Activated CD4-positive, alpha-beta T cell treated with anti-CD3 and anti-CD28 coated beads, Interleukin-2, amount 10 ng/mL, durations not matched to agents 24 days and 14 days (primary cell): ENCODE measurements at regions of chr7 and their contacts with region 1.

Region 1: DNA sequence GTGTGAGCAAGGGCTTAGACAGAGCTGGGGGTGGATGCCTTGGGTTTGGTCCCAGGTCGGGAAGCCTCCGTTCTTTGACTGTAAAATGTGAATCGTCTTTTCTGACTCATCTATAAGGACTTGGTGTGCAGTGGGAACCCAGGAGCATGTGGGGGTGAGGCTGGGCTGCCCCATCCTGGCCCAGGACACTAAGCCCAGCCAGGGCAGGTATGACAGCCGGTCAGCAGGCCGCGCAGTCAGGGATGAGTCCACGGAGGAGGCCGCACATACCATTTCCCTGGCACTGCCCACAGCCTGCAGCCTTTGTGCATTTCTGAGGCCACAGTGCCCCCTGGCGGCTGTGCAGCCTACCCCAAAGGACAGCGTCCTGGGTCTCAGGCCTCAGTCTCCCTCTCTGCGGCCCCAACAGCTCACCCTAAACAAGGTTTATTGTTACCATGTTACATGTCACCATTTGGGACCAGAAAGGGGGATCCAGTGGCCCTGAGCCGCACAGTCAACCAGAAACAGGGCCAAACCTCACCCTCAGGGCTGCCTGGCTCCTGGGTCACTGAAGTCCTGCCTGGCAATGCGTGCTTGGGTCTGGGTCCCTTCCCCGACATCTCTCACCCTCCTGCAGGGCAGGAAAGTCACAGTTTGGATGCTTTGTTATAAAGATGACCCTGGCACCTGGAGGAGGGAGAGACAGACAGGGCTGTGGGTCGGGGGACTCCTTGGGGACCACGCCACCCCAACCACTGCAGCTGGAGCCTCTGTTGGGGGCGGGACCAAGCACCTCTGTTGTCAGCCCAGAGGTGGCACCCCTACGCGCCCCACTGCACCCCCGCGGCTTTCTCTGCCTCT is 14.4 kb upstream of the SH2B2 start:
- DNase-seq: peak; percentile 92
- H3K4me3 Mint-ChIP-seq: no peak overlapping the region
- H3K27ac Mint-ChIP-seq: no peak overlapping the region
- H3K4me1 Mint-ChIP-seq: peaks cover 2% of the 10 kb centered on the region
- H3K27me3 Mint-ChIP-seq: no peaks in the 10 kb centered on the region

Region 2: GRCh38 chr7:101542527-101543241 is 729.6 kb before region 1 on chr7:
- intact Hi-C with region 1: loop called (anchors 1 kb)
- DNase-seq: peak; percentile 92
- H3K4me3 Mint-ChIP-seq: no peak overlapping the region
- H3K27ac Mint-ChIP-seq: no peak overlapping the region
- H3K4me1 Mint-ChIP-seq: no peaks in the 10 kb centered on the region
- H3K27me3 Mint-ChIP-seq: no peaks in the 10 kb centered on the region

Region 3: GRCh38 chr7:101602484-101603241 is 669.6 kb before region 1 on chr7:
- intact Hi-C with region 1: loop called (anchors 1 kb)
- DNase-seq: peak; percentile 91
- H3K4me3 Mint-ChIP-seq: no peak overlapping the region
- H3K27ac Mint-ChIP-seq: no peak overlapping the region
- H3K4me1 Mint-ChIP-seq: no peaks in the 10 kb centered on the region
- H3K27me3 Mint-ChIP-seq: no peaks in the 10 kb centered on the region